Activated T-helper 2 cell treated with anti-CD3 and anti-CD28 coated beads, Interferon-gamma antibody, Interleukin-2, Interleukin-4, amounts not matched to agents 10 μg/mL and 5 μg/mL and 100 μg/mL, durations not matched to agents 14 hours and 24 hours and 36 hours (primary cell): ENCODE measurements at regions of chr2 and their contacts with region 1.

Region 1: GRCh38 chr2:98771721-98772524 is 41.0 kb upstream of the MGAT4A start:
- DNase-seq: peak; percentile 69
- H3K4me3 Mint-ChIP-seq: peak overlapping the region; percentile 91
- H3K27ac Mint-ChIP-seq: peak overlapping the region; percentile 97
- H3K4me1 Mint-ChIP-seq: peaks cover 63% of the 10 kb centered on the region
- H3K27me3 Mint-ChIP-seq: no peaks in the 10 kb centered on the region

Region 2: GRCh38 chr2:98444436-98445176 is 327.3 kb before region 1 on chr2 and contains the start of gene INPP4A:
- intact Hi-C with region 1: loop called (anchors 5 kb)
- DNase-seq: peak; percentile 70
- H3K4me3 Mint-ChIP-seq: peak within 1 kb of the TSS; percentile 86
- H3K27ac Mint-ChIP-seq: peak within 1 kb of the TSS; percentile 86
- H3K4me1 Mint-ChIP-seq: peaks cover 37% of the 10 kb centered on the region
- H3K27me3 Mint-ChIP-seq: no peaks in the 10 kb centered on the region
- total RNA-seq, gene INPP4A: 35.9 and 40.2 TPM in 2 replicates

Region 3: GRCh38 chr2:98691303-98691702 is 80.6 kb before region 1 on chr2:
- intact Hi-C with region 1: loop called (anchors 2 kb)
- DNase-seq: no peak
- H3K4me3 Mint-ChIP-seq: no peak overlapping the region
- H3K27ac Mint-ChIP-seq: peak overlapping the region; percentile 29
- H3K4me1 Mint-ChIP-seq: peaks cover 52% of the 10 kb centered on the region
- H3K27me3 Mint-ChIP-seq: no peaks in the 10 kb centered on the region

Region 4: GRCh38 chr2:98757904-98758421 is 14.0 kb before region 1 on chr2:
- intact Hi-C with region 1: loop called (anchors 2 kb)
- DNase-seq: peak; percentile 41
- H3K4me3 Mint-ChIP-seq: peak overlapping the region; percentile 50
- H3K27ac Mint-ChIP-seq: peak overlapping the region; percentile 83
- H3K4me1 Mint-ChIP-seq: peaks cover 44% of the 10 kb centered on the region
- H3K27me3 Mint-ChIP-seq: peaks cover 3% of the 10 kb centered on the region

Region 5: DNA sequence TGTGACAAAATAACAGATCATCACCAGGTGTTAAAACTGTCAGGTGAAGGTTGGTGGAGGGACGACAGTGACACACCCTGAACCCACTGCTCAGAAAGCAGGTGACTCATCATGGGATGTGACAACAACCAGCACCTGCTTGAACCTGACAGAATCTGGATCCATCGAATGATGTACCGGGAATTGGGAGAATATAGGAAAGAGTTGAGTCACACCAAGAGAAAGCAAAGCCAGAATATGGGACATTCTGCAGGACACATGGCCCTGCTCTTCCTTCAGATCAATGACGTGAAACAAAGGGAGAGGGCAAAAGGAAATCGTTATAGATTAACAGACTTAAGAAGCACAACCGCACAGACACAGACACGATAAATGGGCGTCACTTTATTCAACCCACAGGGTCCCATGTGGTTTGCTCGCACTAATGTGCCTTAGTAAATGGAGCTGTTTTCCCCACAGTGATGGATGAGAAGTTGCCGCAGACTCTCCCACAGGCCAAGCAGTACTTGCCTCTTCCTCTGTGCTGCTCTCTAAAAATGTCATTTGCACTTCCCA is 64.0 kb after region 1 on chr2:
- intact Hi-C with region 1: loop called (anchors 5 kb)
- DNase-seq: peak; percentile 33
- H3K4me3 Mint-ChIP-seq: peak overlapping the region; percentile 24
- H3K27ac Mint-ChIP-seq: peak overlapping the region; percentile 79
- H3K4me1 Mint-ChIP-seq: peaks cover 40% of the 10 kb centered on the region
- H3K27me3 Mint-ChIP-seq: peaks cover 11% of the 10 kb centered on the region

Region 6: DNA sequence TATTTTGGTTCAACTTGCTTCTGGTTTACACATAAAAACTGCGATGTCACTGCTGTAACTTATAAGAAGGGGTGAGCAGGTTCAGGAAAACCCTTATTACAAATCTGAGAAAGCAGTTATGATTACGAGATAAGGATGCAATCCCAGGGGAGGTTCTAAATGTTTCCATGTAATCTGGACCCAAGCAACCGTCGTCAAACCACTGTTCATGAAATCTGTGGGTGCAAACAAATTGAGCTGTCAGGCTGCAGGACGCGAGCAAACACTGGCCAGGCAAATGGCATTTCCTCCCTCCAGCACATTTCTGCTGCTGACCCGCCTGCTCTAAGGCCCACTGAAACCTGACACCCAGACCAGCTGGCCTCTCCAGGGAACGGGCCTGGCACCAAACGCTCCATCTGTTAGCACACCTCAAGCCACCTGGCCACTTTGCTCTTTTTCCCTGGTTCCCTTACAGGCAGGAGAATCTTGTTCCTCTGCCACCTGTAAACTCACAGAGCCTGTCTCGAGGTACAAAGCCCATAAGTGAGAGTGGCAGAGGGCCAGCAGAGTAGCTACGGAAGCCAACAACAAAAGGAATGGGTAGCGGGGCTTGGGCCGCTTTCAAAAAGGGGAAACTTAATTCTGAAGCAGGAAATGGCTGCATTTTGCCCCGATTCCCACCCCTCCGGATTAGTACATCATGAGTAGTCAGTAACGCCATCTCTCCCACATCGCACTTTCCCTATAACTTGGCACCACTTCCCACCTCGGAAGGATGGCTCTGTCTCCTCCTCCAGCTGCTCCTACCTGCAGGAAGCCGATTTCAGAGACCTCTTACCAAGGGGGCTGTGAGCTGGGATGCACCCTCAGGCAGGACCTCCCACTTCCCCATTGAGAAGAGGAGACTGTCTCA is 137.6 kb after region 1 on chr2:
- intact Hi-C with region 1: no loop called
- DNase-seq: no peak
- H3K4me3 Mint-ChIP-seq: peak overlapping the region; percentile 9
- H3K27ac Mint-ChIP-seq: peak overlapping the region; percentile 10
- H3K4me1 Mint-ChIP-seq: peaks cover 29% of the 10 kb centered on the region
- H3K27me3 Mint-ChIP-seq: peaks cover 24% of the 10 kb centered on the region